Endothelial cell of umbilical vein (primary cell): ENCODE measurements at regions of chr9 and their contacts with region 1.

Region 1: GRCh38 chr9:126386088-126386487 is 59.5 kb downstream of the MVB12B start:
- DNase-seq: peak; percentile 49
- H3K4me3 ChIP-seq: no peak overlapping the region
- H3K27ac ChIP-seq: no peak overlapping the region
- H3K4me1 ChIP-seq: peaks cover 17% of the 10 kb centered on the region
- H3K27me3 ChIP-seq: no peaks in the 10 kb centered on the region
- CTCF ChIP-seq: peak; percentile 23 to 53
- POLR2A ChIP-seq: no peak

Region 2: DNA sequence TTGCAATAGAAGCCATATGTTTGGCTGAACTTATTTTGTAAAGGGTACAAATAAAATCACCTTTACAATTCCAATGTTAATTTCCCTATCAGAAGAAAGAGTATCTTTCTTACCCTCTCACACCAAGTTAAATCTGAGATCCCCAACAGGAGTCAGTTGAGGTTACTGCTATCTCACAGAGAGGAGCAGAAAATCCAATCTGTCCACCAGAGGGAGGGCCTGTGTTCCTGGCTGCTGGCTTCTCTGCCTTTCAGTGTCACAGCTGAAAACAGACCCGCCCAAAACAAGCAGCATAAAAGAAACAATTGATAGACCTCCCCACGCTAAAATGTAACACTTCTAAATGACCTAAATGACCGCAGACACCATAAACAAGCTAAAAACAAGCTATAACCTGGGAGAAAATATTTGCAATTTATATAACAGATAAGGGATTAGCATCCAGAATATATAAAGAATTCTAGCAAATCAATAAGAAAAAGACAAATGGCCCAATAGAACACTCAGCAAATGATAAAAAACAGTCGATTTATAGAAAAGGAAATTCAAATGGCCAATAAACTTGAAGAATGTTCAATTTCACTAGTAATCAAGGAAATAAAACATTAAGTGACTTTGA is 84.0 kb before region 1 on chr9:
- CTCF ChIA-PET with region 1: interaction called, 11 read pairs
- POLR2A ChIA-PET with region 1: no interaction called
- dilution Hi-C with region 1: no loop called
- intact Hi-C with region 1: loop called (anchors 1 kb)
- DNase-seq: peak; percentile 68
- H3K4me3 ChIP-seq: no peak overlapping the region
- H3K27ac ChIP-seq: no peak overlapping the region
- H3K4me1 ChIP-seq: no peaks in the 10 kb centered on the region
- H3K27me3 ChIP-seq: peaks cover 0 to 4% of the 10 kb centered on the region in 2 experiments
- CTCF ChIP-seq: peak; percentile 68 to 79
- POLR2A ChIP-seq: no peak

Region 3: GRCh38 chr9:126317513-126317912 is 68.6 kb before region 1 on chr9:
- CTCF ChIA-PET with region 1: interaction called, 13 read pairs
- POLR2A ChIA-PET with region 1: interaction called, 5 read pairs
- dilution Hi-C with region 1: no loop called
- intact Hi-C with region 1: loop called (anchors 1 kb)
- DNase-seq: peak; percentile 48
- H3K4me3 ChIP-seq: no peak overlapping the region
- H3K27ac ChIP-seq: no peak overlapping the region
- H3K4me1 ChIP-seq: no peaks in the 10 kb centered on the region
- H3K27me3 ChIP-seq: peaks cover 0 to 3% of the 10 kb centered on the region in 2 experiments
- CTCF ChIP-seq: peak; percentile 41 to 65
- POLR2A ChIP-seq: no peak

Region 4: DNA sequence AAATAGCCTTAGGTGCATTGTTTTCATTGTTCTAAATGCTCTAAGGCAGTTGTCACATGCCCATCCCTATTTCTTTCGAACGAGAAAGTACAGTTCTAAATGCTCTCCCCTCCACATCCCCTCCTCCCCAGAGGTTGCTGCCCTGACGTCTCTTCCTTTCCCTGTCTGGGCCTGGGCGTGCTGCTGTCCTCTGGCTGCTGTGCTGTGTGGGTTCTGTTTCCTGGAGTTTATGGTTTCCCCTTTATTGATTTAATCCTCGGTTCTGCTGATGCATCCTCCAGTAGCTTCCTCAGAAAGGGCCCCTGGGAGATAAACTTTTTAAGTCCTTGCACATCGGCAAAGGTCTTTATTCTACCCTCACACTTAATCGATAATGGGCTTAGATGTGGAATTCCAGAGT is 10.7 kb before region 1 on chr9:
- CTCF ChIA-PET with region 1: interaction called, 13 read pairs
- POLR2A ChIA-PET with region 1: no interaction called
- dilution Hi-C with region 1: no loop called
- intact Hi-C with region 1: loop called (anchors 1 kb)
- DNase-seq: peak; percentile 65
- H3K4me3 ChIP-seq: no peak overlapping the region
- H3K27ac ChIP-seq: peak overlapping the region; percentile 38
- H3K4me1 ChIP-seq: peaks cover 47% of the 10 kb centered on the region
- H3K27me3 ChIP-seq: no peaks in the 10 kb centered on the region
- CTCF ChIP-seq: no peak
- POLR2A ChIP-seq: no peak